ENCODE measurements at regions of chr1 and their contacts with region 1.

Region 1: GRCh38 chr1:18597160-18598042 is 33.2 kb upstream of the PAX7 start:
- DNase-seq: no peak
- H3K4me3 ChIP-seq: no peak overlapping the region
- H3K27ac ChIP-seq: no peak overlapping the region
- H3K4me1 ChIP-seq: peaks cover 0 to 10% (median 3%) of the 10 kb centered on the region in 4 donors
- H3K27me3 ChIP-seq: peaks cover 0 to 85% (median 6%) of the 10 kb centered on the region in 4 donors
- CTCF ChIP-seq: peak; percentile 75 to 92 (median 87)
- EP300 ChIP-seq: no peak
- POLR2A ChIP-seq: no peak

Region 2: DNA sequence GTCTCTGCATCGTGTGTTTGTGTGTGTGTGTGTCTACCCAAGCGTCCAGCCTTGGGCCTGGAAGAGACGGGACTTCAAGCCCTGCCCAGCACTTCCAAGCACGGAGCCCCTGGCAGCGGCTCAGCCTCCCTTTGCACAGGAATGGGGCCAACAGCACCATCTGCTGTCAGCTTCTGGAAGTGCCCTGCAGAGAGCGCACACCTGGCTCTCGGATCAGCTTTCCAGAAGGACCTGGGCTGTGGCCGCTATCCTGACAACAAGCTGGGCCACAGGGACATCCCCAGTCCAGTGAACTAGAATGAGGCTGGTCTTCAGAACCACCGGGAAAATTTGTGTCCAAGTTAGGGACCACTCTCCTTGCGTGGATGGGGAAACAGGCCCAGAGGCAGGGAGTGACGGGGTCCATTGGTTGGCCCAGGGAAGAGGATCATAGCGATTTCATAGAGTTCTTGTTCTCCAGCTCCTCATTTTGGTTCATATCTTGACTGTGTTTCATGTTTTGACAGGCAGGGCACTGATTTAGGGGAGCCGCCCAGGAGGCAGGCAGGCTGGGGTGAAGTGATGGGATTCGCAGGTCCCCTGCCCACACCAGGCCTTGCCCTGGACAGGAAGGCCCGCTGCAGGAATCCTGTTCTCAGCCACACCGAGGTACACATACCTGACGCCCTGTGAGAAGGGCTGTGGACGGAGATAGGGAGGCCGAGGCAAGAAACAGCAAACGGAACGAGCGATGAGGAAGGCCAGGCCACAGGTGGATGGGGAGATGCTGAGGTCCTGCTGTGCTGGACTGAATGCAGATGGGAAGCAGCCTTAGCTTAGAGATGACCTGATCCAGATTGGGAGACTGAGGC is 223.6 kb after region 1 on chr1:
- intact Hi-C with region 1: loop called (anchors 1 kb)
- DNase-seq: peak; percentile 94
- H3K4me3 ChIP-seq: no peak overlapping the region
- H3K27ac ChIP-seq: no peak overlapping the region
- H3K4me1 ChIP-seq: peaks cover 0 to 8% (median 6%) of the 10 kb centered on the region in 4 donors
- H3K27me3 ChIP-seq: peaks cover 0 to 62% (median 10%) of the 10 kb centered on the region in 4 donors
- CTCF ChIP-seq: peak; percentile 78 to 94 (median 84)
- EP300 ChIP-seq: no peak
- POLR2A ChIP-seq: no peak

Region 3: GRCh38 chr1:18875107-18875795 is 277.9 kb after region 1 on chr1:
- intact Hi-C with region 1: loop called (anchors 2 kb)
- DNase-seq: peak; percentile 94
- H3K4me3 ChIP-seq: no peak overlapping the region
- H3K27ac ChIP-seq: no peak overlapping the region
- H3K4me1 ChIP-seq: peaks cover 3 to 16% (median 11%) of the 10 kb centered on the region in 4 donors
- H3K27me3 ChIP-seq: no peaks in the 10 kb centered on the region
- CTCF ChIP-seq: peak; percentile 69 to 92 (median 75)
- EP300 ChIP-seq: no peak
- POLR2A ChIP-seq: no peak